Panc1 (cell line): ENCODE measurements at regions of chr19 and their contacts with region 1.

Region 1: DNA sequence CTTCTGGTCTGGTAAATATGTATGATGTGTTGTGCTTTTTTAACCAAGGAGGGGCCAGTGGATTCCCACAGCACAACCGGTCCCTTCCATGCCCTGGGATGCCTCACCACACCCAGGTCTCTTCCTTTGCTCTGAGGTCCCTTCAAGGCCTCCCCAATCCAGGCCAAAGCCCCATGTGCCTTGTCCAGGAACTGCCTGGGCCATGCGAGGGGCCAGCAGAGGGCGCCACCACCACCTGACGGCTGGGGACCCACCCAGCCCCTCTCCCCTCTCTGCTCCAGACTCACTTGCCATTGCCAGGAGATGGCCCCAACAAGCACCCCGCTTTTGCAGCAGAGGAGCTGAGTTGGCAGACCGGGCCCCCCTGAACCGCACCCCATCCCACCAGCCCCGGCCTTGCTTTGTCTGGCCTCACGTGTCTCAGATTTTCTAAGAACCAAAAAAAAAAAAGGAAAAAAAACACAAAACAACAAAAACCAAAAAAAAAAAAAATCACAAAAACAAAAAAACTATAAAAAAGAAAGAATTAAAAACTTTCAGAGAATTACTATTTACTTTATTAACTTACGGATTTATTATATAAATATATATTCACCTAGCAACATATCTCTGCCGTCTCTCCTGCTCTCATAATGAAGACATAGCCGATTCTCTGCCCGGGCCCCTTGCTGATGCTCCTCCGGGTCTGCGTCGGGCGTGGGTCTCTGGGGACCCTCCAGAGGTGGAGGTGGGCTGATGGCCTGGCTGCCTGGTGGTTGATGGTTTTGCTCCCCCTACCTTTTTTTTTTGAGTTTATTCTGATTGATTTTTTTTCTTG is 14.4 kb downstream of the CAPN12 start:
- DNase-seq: peak; percentile 61
- ATAC-seq: peak; percentile 46
- H3K4me3 ChIP-seq: no peak overlapping the region
- H3K27ac ChIP-seq: peak overlapping the region; percentile 93
- H3K4me1 ChIP-seq: peaks cover 96% of the 10 kb centered on the region
- H3K27me3 ChIP-seq: no peaks in the 10 kb centered on the region
- CTCF ChIP-seq: no peak

Region 2: GRCh38 chr19:38569368-38569983 is 160.4 kb before region 1 on chr19:
- CTCF ChIA-PET with region 1: no interaction called
- POLR2A ChIA-PET with region 1: no interaction called
- in situ Hi-C with region 1: no loop called
- intact Hi-C with region 1: no loop called
- DNase-seq: no peak
- ATAC-seq: no peak
- H3K4me3 ChIP-seq: no peak overlapping the region
- H3K27ac ChIP-seq: no peak overlapping the region
- H3K4me1 ChIP-seq: peaks cover 7% of the 10 kb centered on the region; the same call in 1 of the 2 replicates
- H3K27me3 ChIP-seq: no peaks in the 10 kb centered on the region
- CTCF ChIP-seq: no peak

Region 3: DNA sequence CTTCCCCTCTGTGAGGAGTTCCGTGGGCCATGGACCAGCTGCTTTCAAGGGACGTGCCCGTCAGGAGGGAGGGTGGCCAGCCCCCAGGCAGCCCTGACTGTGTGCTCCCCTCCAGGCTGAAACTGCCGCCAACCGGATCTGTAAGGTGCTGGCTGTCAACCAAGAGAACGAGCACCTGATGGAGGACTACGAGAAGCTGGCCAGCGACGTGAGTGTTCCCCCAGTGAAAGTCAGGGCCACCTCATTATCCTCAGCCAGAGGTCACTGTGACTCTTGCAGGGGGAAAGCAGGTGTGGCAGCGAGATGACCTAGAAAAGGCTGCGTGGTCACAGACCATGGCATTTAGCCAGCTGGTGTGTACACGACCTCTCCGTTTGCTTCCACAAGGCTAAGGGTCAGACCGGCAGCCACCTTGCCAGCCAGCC is 15.5 kb before region 1 on chr19:
- CTCF ChIA-PET with region 1: interaction called, 4 read pairs
- POLR2A ChIA-PET with region 1: interaction called, 10 read pairs
- in situ Hi-C with region 1: no loop called
- intact Hi-C with region 1: no loop called
- DNase-seq: no peak
- ATAC-seq: no peak
- H3K4me3 ChIP-seq: no peak overlapping the region
- H3K27ac ChIP-seq: peak overlapping the region; percentile 68
- H3K4me1 ChIP-seq: peaks cover 76% of the 10 kb centered on the region
- H3K27me3 ChIP-seq: no peaks in the 10 kb centered on the region
- CTCF ChIP-seq: no peak